IMR-90 (cell line): ENCODE measurements at regions of chr17 and their contacts with region 1.

Region 1: DNA sequence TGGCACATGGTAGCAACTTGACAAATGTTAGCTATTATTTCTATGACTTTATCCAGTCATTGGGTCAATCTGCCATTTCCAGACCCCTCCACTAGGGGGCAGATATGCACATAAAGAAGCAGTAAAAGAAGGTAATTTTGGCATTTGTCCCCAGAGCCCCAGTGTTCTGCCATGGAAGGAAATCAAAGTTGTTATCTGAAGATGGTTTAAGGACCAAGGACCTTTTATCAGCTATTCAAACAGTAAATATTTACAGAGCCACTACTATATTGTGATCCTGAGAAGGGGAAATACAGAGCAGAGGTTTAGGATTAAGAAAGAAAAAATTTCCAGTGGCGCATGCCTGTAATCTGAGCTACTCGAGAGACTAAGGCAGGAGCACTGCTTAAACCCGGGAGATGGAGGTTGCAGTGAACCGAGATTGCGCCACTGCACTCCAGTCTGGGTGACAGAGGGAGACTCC is 20.0 kb downstream of the TRAF4 start:
- DNase-seq: peak; percentile 74
- ATAC-seq: peak; percentile 76
- H3K4me3 ChIP-seq: no peak overlapping the region
- H3K27ac ChIP-seq: no peak overlapping the region
- H3K4me1 ChIP-seq: peaks cover 4% of the 10 kb centered on the region; the same call in 1 of the 2 replicates
- H3K27me3 ChIP-seq: no peaks in the 10 kb centered on the region
- CTCF ChIP-seq: peak; percentile 85
- POLR2A ChIP-seq: no peak
- RAD21 ChIP-seq: peak; percentile 82

Region 2: GRCh38 chr17:28788100-28788499 is 24.3 kb after region 1 on chr17:
- CTCF ChIA-PET with region 1: no interaction called
- POLR2A ChIA-PET with region 1: no interaction called
- dilution Hi-C with region 1: no loop called
- in situ Hi-C with region 1: no loop called
- intact Hi-C with region 1: loop called (anchors 2 kb)
- DNase-seq: no peak
- ATAC-seq: no peak
- H3K4me3 ChIP-seq: no peak overlapping the region
- H3K27ac ChIP-seq: no peak overlapping the region
- H3K4me1 ChIP-seq: no peaks in the 10 kb centered on the region
- H3K27me3 ChIP-seq: no peaks in the 10 kb centered on the region
- CTCF ChIP-seq: no peak
- POLR2A ChIP-seq: no peak
- RAD21 ChIP-seq: no peak

Region 3: DNA sequence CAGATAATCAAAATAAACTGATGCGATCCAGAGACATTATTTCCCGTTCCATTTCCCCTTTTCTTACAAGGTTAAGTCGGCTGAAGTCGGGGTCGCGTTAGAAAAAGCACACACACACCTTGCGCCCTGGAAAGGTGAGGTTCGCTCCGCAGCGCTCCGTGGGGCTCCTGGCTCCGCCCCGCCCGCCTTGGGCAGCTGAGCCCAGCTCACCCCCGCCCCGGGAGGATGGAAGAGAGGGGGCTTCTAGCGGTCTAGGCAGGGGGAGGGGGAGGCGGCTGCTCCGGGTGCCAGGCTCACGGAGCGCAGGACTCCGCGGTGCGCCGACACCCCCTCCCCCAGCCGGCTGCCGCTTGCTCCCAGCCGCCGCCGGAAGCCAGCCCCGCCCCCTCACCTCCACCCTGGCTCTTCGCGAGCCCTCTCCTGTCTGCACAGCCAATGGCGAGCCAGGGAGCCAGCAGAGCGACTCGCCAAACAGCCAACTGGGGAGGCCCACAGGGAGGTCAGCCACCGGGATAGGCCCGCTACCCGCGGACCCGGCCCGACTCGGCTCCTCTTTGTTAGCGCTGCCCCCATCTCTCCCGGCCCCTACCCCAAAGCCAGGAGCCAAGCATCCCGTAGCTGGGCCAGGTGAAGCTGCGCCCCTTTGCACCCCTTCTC is 48.4 kb after region 1 on chr17:
- CTCF ChIA-PET with region 1: interaction called, 5 read pairs
- POLR2A ChIA-PET with region 1: no interaction called
- dilution Hi-C with region 1: no loop called
- in situ Hi-C with region 1: no loop called
- intact Hi-C with region 1: loop called (anchors 10 kb)
- DNase-seq: peak; percentile 96
- ATAC-seq: peak; percentile 99
- H3K4me3 ChIP-seq: peak overlapping the region; percentile 82
- H3K27ac ChIP-seq: peak overlapping the region; percentile 96
- H3K4me1 ChIP-seq: peaks cover 9% of the 10 kb centered on the region; the same call in 1 of the 2 replicates
- H3K27me3 ChIP-seq: no peaks in the 10 kb centered on the region
- CTCF ChIP-seq: no peak
- POLR2A ChIP-seq: no peak
- RAD21 ChIP-seq: no peak

Region 4: GRCh38 chr17:28828294-28829040 is 64.6 kb after region 1 on chr17:
- CTCF ChIA-PET with region 1: interaction called, 11 read pairs
- POLR2A ChIA-PET with region 1: no interaction called
- dilution Hi-C with region 1: no loop called
- in situ Hi-C with region 1: no loop called
- intact Hi-C with region 1: no loop called
- DNase-seq: peak; percentile 35
- ATAC-seq: no peak
- H3K4me3 ChIP-seq: no peak overlapping the region
- H3K27ac ChIP-seq: no peak overlapping the region
- H3K4me1 ChIP-seq: no peaks in the 10 kb centered on the region; the same call in none of the 2 replicates
- H3K27me3 ChIP-seq: no peaks in the 10 kb centered on the region
- CTCF ChIP-seq: no peak
- POLR2A ChIP-seq: no peak
- RAD21 ChIP-seq: no peak

Region 5: DNA sequence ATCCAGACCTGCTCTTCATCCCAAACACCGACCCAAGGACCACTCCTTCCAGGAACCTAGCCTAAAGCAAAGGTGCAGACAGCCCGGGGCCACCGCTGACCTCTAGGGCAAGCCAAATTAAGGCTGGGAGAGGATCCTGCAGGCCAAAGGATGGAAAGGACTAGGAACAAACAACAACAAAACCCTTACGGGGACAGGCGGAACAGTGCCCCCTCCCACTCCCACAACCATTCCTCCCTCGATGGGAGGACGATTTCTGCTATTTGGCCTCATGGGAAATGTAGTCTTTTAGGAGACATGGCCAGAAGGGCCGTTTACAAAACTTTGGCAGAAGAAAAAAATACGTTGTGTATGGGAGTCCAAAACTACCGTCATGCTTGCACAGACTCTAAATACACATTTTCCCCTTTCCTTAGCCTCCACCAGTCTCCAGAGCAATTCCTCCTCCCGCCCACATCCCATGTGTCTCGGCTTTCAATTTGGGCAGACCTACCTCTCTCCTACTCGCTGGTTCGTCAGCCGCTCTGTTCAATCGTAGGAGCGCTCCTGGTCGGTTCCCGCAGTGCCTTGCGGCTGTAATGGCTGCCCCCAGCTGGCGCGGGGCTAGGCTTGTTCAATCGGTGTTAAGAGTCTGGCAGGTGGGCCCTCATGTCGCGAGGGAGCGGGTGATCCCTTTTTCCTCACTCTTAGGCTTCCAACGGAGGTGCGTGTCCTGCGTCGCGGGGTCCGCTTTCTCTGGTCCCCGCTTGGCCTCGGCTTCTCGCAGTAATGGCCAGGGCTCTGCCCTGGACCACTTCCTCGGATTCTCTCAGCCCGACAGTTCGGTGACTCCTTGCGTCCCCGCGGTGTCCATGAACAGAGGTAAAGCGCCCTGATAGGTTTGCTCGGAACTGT is 90.9 kb after region 1 on chr17 and contains the start of gene ERAL1:
- CTCF ChIA-PET with region 1: no interaction called
- POLR2A ChIA-PET with region 1: no interaction called
- dilution Hi-C with region 1: no loop called
- in situ Hi-C with region 1: no loop called
- intact Hi-C with region 1: loop called (anchors 5 kb)
- DNase-seq: peak; percentile 86
- ATAC-seq: peak; percentile 100
- H3K4me3 ChIP-seq: peak within 1 kb of the TSS; percentile 84
- H3K27ac ChIP-seq: peak within 1 kb of the TSS; percentile 84
- H3K4me1 ChIP-seq: no peaks in the 10 kb centered on the region
- H3K27me3 ChIP-seq: no peaks in the 10 kb centered on the region
- CTCF ChIP-seq: no peak
- POLR2A ChIP-seq: peak; percentile 86
- RAD21 ChIP-seq: peak; percentile 23
- total RNA-seq, gene ERAL1: 25.8 and 34.1 TPM in 2 replicates

Region 6: GRCh38 chr17:28878981-28879380 is 115.1 kb after region 1 on chr17:
- CTCF ChIA-PET with region 1: interaction called, 7 read pairs
- POLR2A ChIA-PET with region 1: no interaction called
- dilution Hi-C with region 1: no loop called
- in situ Hi-C with region 1: no loop called
- intact Hi-C with region 1: loop called (anchors 1 kb)
- DNase-seq: peak; percentile 32
- ATAC-seq: peak; percentile 82
- H3K4me3 ChIP-seq: no peak overlapping the region
- H3K27ac ChIP-seq: no peak overlapping the region
- H3K4me1 ChIP-seq: no peaks in the 10 kb centered on the region
- H3K27me3 ChIP-seq: no peaks in the 10 kb centered on the region
- CTCF ChIP-seq: peak; percentile 50
- POLR2A ChIP-seq: no peak
- RAD21 ChIP-seq: peak; percentile 57

Region 7: GRCh38 chr17:28896884-28897768 is 133.3 kb after region 1 on chr17 and contains the start of gene FLOT2:
- CTCF ChIA-PET with region 1: interaction called, 15 read pairs
- POLR2A ChIA-PET with region 1: no interaction called
- dilution Hi-C with region 1: no loop called
- in situ Hi-C with region 1: no loop called
- intact Hi-C with region 1: loop called (anchors 1 kb)
- DNase-seq: peak; percentile 30
- ATAC-seq: peak; percentile 84
- H3K4me3 ChIP-seq: peak within 1 kb of the TSS; percentile 79
- H3K27ac ChIP-seq: peak within 1 kb of the TSS; percentile 76
- H3K4me1 ChIP-seq: peaks cover 9% of the 10 kb centered on the region
- H3K27me3 ChIP-seq: no peaks in the 10 kb centered on the region
- CTCF ChIP-seq: peak; percentile 27; the same call in 1 of the 2 replicates
- POLR2A ChIP-seq: no peak
- RAD21 ChIP-seq: no peak
- total RNA-seq, gene FLOT2: 19.7 and 31.1 TPM in 2 replicates